B cell (primary cell): ENCODE measurements at regions of chr12 and their contacts with region 1.

Region 1: GRCh38 chr12:123271001-123271729 is 491 bp downstream of the CDK2AP1 start:
- DNase-seq: peak; percentile 81
- ATAC-seq: peak; percentile 74
- H3K4me3 ChIP-seq: peak overlapping the region in 3 of 5 experiments; percentile 52 to 56 (median 54)
- H3K4me3 Mint-ChIP-seq: no peak overlapping the region
- H3K27ac ChIP-seq: no peak overlapping the region
- H3K27ac Mint-ChIP-seq: no peak overlapping the region
- H3K4me1 ChIP-seq: peaks cover 31 to 37% of the 10 kb centered on the region in 2 donors
- H3K4me1 Mint-ChIP-seq: peaks cover 29% of the 10 kb centered on the region
- H3K27me3 ChIP-seq: peaks cover 0 to 6% (median 0%) of the 10 kb centered on the region in 4 experiments
- H3K27me3 Mint-ChIP-seq: no peaks in the 10 kb centered on the region
- CTCF ChIP-seq: peak; percentile 38

Region 2: DNA sequence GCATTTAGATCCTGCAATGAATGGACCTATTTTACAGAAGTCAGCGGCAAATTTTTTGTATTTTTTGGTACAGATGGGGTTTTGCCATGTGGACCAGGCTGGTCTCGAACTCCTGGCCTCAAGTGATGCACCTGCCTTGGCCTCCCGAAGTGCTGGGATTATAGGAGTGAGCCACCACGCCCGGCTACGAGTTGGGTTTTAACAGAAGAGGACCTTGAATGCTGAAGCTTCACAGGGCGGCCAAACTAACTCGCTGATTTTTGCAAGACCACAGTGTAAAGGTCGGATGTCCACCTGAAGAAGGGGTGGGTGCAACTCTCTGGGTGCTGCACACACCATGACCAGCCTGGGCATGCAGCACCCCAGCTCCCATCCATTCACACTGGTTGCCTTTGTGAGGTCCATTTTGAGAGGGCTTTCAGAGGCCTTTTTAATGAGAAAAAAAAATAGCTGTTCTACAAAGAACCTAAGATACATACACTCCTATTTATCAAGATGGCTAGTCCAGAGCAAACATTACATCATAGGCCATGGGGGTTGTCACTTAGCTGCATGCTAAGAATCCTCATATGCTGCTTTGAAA is 22.1 kb after region 1 on chr12:
- CTCF ChIA-PET with region 1: no interaction called
- POLR2A ChIA-PET with region 1: no interaction called
- intact Hi-C with region 1: no loop called
- DNase-seq: no peak
- ATAC-seq: no peak
- H3K4me3 ChIP-seq: no peak overlapping the region
- H3K4me3 Mint-ChIP-seq: no peak overlapping the region
- H3K27ac ChIP-seq: no peak overlapping the region
- H3K27ac Mint-ChIP-seq: no peak overlapping the region
- H3K4me1 ChIP-seq: no peaks in the 10 kb centered on the region
- H3K4me1 Mint-ChIP-seq: no peaks in the 10 kb centered on the region
- H3K27me3 ChIP-seq: no peaks in the 10 kb centered on the region
- H3K27me3 Mint-ChIP-seq: no peaks in the 10 kb centered on the region
- CTCF ChIP-seq: no peak

Region 3: DNA sequence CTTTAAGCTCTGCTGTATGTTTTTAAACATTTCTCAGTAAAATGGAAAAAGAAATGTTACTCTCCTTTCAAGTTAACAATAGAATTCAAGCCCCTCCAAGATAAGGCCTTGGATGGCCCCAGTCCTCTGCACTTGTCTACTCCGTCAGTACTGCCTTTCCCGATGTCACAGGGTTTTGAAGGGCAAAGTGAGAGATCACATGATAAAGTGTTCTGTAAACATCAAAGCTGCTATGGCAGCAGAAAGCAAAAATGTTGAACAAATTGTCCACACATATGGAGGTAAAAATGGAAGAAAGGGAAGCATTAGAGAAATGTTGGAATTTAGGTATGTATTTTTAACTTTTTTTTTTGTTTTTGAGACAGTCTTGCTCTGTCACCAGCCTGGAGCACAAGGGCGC is 34.0 kb after region 1 on chr12:
- CTCF ChIA-PET with region 1: no interaction called
- POLR2A ChIA-PET with region 1: no interaction called
- intact Hi-C with region 1: no loop called
- DNase-seq: no peak
- ATAC-seq: no peak
- H3K4me3 ChIP-seq: no peak overlapping the region
- H3K4me3 Mint-ChIP-seq: no peak overlapping the region
- H3K27ac ChIP-seq: no peak overlapping the region
- H3K27ac Mint-ChIP-seq: no peak overlapping the region
- H3K4me1 ChIP-seq: no peaks in the 10 kb centered on the region
- H3K4me1 Mint-ChIP-seq: no peaks in the 10 kb centered on the region
- H3K27me3 ChIP-seq: no peaks in the 10 kb centered on the region
- H3K27me3 Mint-ChIP-seq: no peaks in the 10 kb centered on the region
- CTCF ChIP-seq: no peak

Region 4: DNA sequence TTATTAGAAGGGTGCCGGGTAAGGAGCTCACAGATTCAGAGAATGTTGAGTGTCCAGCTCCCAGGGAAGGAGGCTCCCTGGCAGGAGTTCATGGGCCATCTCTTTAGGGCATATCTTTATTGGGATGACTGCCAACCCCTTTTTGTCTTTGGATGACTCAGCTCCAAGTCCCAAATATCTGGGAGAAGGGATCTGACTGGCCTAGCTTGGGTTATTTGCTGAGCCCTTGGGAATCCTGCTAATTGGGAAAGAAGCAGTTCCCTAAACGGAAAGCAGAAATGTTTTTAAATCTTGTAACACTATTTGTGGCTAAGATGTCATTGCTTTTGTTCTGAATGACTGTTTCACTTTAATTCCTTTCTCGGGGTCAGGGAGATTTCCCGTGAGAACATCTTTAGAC is 343.4 kb after region 1 on chr12:
- CTCF ChIA-PET with region 1: no interaction called
- POLR2A ChIA-PET with region 1: no interaction called
- intact Hi-C with region 1: loop called (anchors 2 kb)
- DNase-seq: no peak
- ATAC-seq: no peak
- H3K4me3 ChIP-seq: no peak overlapping the region
- H3K4me3 Mint-ChIP-seq: no peak overlapping the region
- H3K27ac ChIP-seq: no peak overlapping the region
- H3K27ac Mint-ChIP-seq: no peak overlapping the region
- H3K4me1 ChIP-seq: no peaks in the 10 kb centered on the region
- H3K4me1 Mint-ChIP-seq: no peaks in the 10 kb centered on the region
- H3K27me3 ChIP-seq: no peaks in the 10 kb centered on the region
- H3K27me3 Mint-ChIP-seq: no peaks in the 10 kb centered on the region
- CTCF ChIP-seq: no peak